Pancreas (tissue), 10 donors: ENCODE measurements at regions of chr6 and their contacts with region 1.

Region 1: DNA sequence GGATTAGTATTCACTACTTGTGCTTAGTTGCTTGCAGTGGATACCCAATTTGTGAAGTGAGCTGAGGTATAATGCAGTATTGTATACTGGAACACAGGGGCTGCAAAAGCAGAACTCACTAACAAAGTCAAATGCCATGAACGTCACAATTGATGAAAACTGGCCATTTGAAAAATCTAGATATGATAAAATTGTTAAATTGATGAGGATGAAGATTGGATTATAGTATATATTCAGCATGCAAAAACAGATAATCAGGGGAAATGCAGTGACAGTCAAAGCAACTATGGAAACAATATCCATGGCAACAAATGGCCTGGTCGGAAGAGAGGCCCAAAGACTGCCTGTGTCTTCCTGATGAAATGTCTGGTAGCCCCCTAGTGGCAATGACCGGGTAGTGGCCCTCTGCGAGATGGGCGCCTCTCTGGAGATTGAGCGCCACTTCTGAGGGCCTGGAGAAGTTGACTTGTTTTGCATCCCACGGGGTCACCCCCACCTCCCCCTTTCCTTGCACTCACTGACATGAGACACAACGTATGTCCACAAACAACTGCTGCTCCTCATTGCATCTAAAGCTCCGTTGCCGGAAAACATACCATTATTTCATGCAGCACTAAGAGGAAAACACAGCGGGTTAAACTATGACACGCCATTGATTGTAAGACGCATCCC is 43.6 kb downstream of the C6orf15 start:
- DNase-seq: peak; percentile 67 to 85 (median 78)
- ATAC-seq: peak; percentile 90 to 98 (median 96)
- H3K4me3 ChIP-seq: no peak overlapping the region
- H3K27ac ChIP-seq: no peak overlapping the region
- H3K4me1 ChIP-seq: no peaks in the 10 kb centered on the region
- H3K27me3 ChIP-seq: no peaks in the 10 kb centered on the region
- CTCF ChIP-seq: peak; percentile 86 to 92 (median 89)

Region 2: DNA sequence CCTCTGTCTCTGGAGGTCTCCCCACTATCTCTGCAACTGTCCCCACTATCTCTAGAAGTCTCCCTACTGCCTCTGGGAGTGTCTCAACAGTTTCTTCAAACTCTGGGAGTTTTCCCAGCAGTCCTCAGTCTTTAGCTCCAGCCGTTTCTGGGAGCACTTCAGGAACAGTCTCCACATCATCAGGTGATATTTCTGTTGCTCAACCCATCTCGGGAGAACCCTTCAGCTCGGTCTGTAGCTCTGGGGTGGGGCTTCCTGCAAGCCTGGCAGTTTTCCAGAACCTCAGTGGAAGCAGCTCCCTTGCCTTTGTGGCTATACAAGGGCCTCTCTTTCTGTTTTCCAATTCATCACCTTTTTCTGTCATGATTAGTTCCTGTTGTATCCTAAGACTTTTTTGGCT is 133.8 kb before region 1 on chr6:
- intact Hi-C with region 1: loop called in 1 of 3 experiments (anchors 10 kb)
- DNase-seq: no peak
- ATAC-seq: no peak
- H3K4me3 ChIP-seq: no peak overlapping the region
- H3K27ac ChIP-seq: no peak overlapping the region
- H3K4me1 ChIP-seq: peaks cover 0 to 6% (median 0%) of the 10 kb centered on the region in 3 donors
- H3K27me3 ChIP-seq: no peaks in the 10 kb centered on the region
- CTCF ChIP-seq: no peak